ENCODE measurements at regions of chr9 and their contacts with region 1.

Region 1: GRCh38 chr9:84216151-84216550 is 124.4 kb downstream of the SLC28A3 start:
- DNase-seq: peak; percentile 8
- H3K4me3 Mint-ChIP-seq: no peak overlapping the region
- H3K27ac Mint-ChIP-seq: no peak overlapping the region
- H3K4me1 Mint-ChIP-seq: peaks cover 6% of the 10 kb centered on the region
- H3K27me3 Mint-ChIP-seq: no peaks in the 10 kb centered on the region
- CTCF ChIP-seq: no peak

Region 2: DNA sequence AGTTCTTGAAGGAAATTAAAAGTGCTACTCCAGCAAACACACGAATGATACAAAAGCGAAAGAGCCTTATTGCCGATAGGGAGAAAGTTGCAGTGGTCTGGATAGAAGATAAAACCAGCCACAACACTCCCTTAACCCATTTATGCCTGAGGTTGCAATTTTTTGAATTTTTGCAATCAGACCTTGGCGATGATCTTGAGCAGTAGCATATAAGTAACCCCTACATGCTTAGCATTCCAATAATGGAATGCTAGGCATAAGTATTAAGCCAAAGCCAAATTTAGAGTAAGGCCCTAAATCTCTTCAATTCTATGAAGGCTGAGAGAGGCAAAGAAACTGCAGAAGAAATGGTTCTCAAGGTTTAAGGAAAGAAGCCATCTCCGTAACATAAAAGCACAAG is 29.1 kb before region 1 on chr9:
- CTCF ChIA-PET with region 1: interaction called, 3 read pairs
- POLR2A ChIA-PET with region 1: interaction called, 17 read pairs
- intact Hi-C with region 1: no loop called
- DNase-seq: no peak
- H3K4me3 Mint-ChIP-seq: no peak overlapping the region
- H3K27ac Mint-ChIP-seq: no peak overlapping the region
- H3K4me1 Mint-ChIP-seq: peaks cover 4% of the 10 kb centered on the region
- H3K27me3 Mint-ChIP-seq: no peaks in the 10 kb centered on the region
- CTCF ChIP-seq: no peak

Region 3: DNA sequence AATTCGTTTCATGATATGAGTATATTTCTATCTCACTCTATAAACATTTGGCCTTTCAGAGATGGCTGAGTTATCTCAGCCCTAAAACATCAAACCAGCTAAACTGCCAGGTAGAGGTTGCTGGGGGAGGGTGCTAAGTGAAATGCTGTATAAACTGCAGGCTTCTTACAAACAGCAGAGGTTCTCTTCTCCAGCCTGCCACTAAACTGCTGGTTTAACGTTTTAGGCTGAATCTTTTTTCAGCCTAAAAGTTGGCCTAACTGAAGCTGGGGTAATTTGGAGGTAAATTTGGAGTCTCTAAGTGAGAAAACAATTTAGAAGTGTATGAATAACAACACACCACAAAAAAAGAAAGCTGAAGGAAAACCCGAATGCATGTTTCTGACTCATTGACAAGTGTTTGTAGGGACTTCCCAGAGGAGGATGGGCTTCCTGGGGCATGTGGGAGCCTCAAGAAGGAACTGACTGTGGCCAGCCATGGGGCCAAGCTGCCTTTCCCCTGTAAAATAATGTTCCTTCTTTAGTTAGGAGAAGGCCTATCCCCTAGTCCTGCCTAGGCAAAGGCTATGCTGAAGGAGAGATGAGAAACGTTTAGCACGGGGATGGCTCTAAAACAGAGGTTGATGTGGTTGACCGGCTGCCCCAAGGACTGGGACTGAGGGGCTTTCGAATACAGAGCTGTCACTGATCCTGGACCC is 80.1 kb after region 1 on chr9:
- CTCF ChIA-PET with region 1: no interaction called
- POLR2A ChIA-PET with region 1: no interaction called
- intact Hi-C with region 1: no loop called
- DNase-seq: peak; percentile 55
- H3K4me3 Mint-ChIP-seq: no peak overlapping the region
- H3K27ac Mint-ChIP-seq: peak overlapping the region; percentile 79
- H3K4me1 Mint-ChIP-seq: peaks cover 17% of the 10 kb centered on the region
- H3K27me3 Mint-ChIP-seq: no peaks in the 10 kb centered on the region
- CTCF ChIP-seq: no peak